ENCODE measurements at regions of chr15 and their contacts with region 1.

Region 1: DNA sequence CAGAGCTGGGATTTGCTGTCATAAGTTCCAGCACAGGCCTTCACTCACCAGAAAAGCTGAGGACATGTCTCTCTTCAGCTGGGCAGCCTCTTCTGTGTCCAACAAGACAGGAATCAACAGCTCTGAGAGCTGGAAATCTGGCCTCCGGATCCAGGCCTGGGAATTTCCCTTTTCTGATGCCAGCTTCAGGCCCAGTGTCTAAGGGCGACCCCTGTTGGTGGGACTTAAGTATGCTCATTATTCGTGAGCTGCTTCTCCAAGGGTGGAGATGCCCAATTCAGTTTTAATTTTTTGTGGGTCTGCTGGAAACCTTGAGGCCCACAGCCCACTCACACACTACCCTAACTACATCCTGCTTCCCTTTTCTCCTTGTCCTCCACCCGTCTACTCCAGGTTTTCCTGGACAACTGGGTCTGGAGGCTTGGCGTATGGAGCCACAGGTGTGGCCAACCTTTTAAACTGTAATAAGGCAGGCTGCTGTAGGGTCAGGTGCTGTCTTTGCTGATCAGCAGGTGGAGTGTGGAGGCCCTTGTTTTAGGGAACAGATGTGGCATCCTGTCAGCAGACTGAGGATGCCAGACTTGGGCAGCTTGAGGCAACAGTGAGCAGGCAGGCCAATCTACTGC is 2.6 kb upstream of the CEMIP start:
- DNase-seq: peak; percentile 83 to 86
- ATAC-seq: peak in 1 of 2 experiments; percentile 31; a peak in 3 of 6 replicates
- H3K4me3 ChIP-seq: no peak overlapping the region
- H3K27ac ChIP-seq: 0 out of 6 replicates have a peak overlapping the region, but pooled peaks of 1 of the 2 experiments have one; percentile 42
- H3K4me1 ChIP-seq: peaks cover 12% of the 10 kb centered on the region; the same call in 2 of the 3 replicates
- CTCF ChIP-seq: peak; percentile 97
- EP300 ChIP-seq: no peak
- POLR2A ChIP-seq: no peak
- RAD21 ChIP-seq: peak; percentile 93 to 98

Region 2: DNA sequence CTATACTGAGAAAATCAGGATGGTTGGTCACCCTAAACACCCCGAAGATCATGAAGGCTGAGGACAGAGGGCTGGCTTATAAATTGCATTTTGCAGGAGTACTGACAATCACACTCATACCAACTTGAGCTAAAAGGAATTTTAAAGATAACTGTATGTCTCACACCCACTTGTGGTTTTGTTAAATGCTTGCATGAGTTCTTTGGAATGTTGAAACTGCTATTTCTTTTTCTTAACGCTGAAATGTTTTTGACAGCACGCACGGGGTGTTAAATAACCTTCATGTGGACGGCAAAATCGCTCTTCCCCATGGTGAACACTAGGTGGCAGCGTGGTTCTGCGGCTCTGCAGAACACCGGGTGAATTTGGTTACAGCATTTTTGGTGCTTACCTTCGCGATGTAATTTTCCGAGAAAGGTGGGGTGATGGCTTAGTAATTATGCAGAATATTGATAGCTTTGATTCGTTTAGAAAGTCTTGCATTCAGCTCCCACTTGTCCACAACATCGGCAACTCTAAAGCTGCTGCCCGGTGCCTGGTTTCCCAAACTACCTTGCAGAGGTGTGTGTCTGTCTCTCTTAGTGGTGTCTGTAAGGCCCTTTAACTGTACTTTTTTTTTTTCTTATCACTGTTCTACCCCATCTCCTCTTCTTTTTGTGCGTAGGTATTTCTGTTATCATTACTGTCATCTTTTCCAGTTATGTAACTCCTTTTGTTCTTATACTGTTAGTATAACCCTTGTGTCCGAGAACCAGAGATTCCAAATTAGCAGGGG is 320.7 kb before region 1 on chr15:
- CTCF ChIA-PET with region 1: interaction called, 228 read pairs
- POLR2A ChIA-PET with region 1: no interaction called
- DNase-seq: peak; percentile 78 to 83
- ATAC-seq: peak; percentile 79 to 92
- H3K4me3 ChIP-seq: no peak overlapping the region
- H3K27ac ChIP-seq: no peak overlapping the region
- H3K4me1 ChIP-seq: peaks cover 14% of the 10 kb centered on the region
- CTCF ChIP-seq: peak; percentile 99
- EP300 ChIP-seq: no peak
- POLR2A ChIP-seq: no peak
- RAD21 ChIP-seq: peak; percentile 98 to 99

Region 3: GRCh38 chr15:80480909-80481308 is 295.6 kb before region 1 on chr15:
- CTCF ChIA-PET with region 1: interaction called, 12 read pairs
- POLR2A ChIA-PET with region 1: no interaction called
- DNase-seq: no peak
- ATAC-seq: peak; percentile 38 to 74; a peak in 3 of 6 replicates
- H3K4me3 ChIP-seq: no peak overlapping the region
- H3K27ac ChIP-seq: peak overlapping the region in 1 of 2 experiments; percentile 12; a peak in 1 of 6 replicates
- H3K4me1 ChIP-seq: peaks cover 15% of the 10 kb centered on the region; the same call in 2 of the 3 replicates
- CTCF ChIP-seq: no peak
- EP300 ChIP-seq: no peak
- POLR2A ChIP-seq: no peak
- RAD21 ChIP-seq: no peak

Region 4: DNA sequence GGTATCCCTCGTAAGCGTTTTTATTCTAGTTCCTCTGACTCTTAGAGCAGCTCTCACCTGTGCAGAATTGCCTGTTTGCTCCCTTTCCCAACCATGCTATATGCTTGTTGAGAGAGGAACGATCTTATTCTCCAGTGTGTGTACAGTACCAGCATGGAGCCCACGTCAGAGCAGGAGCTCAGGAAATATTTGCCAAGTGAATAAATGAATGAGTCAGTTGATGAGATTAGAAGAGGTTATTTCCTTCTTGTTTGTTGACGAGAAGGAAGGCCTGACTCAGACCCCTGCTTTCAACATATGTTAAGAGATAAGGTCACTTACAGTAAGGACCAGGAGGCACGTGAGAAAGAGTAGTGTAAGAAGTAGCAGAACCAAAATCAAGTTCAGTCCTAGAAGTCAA is 187.7 kb before region 1 on chr15:
- CTCF ChIA-PET with region 1: interaction called, 11 read pairs
- POLR2A ChIA-PET with region 1: no interaction called
- DNase-seq: peak; percentile 80 to 90
- ATAC-seq: peak; percentile 85 to 90
- H3K4me3 ChIP-seq: 0 out of 3 replicates have a peak overlapping the region, but pooled peaks have one; percentile 4
- H3K27ac ChIP-seq: peak overlapping the region; percentile 72 to 79
- H3K4me1 ChIP-seq: peaks cover 47% of the 10 kb centered on the region
- CTCF ChIP-seq: no peak
- EP300 ChIP-seq: peak; percentile 77 to 86; a peak in 3 of 5 replicates
- POLR2A ChIP-seq: no peak
- RAD21 ChIP-seq: no peak; a peak in 1 of 5 replicates

Region 5: GRCh38 chr15:80660122-80660521 is 116.4 kb before region 1 on chr15:
- CTCF ChIA-PET with region 1: interaction called, 67 read pairs
- POLR2A ChIA-PET with region 1: no interaction called
- DNase-seq: peak; percentile 55 to 63
- ATAC-seq: peak; percentile 98 to 100
- H3K4me3 ChIP-seq: no peak overlapping the region
- H3K27ac ChIP-seq: no peak overlapping the region
- H3K4me1 ChIP-seq: no peaks in the 10 kb centered on the region
- CTCF ChIP-seq: peak; percentile 53
- EP300 ChIP-seq: no peak
- POLR2A ChIP-seq: no peak
- RAD21 ChIP-seq: peak; percentile 60 to 73

Region 6: GRCh38 chr15:80727196-80727595 is 49.3 kb before region 1 on chr15:
- CTCF ChIA-PET with region 1: interaction called, 12 read pairs
- POLR2A ChIA-PET with region 1: no interaction called
- DNase-seq: no peak
- ATAC-seq: no peak
- H3K4me3 ChIP-seq: no peak overlapping the region
- H3K27ac ChIP-seq: no peak overlapping the region
- H3K4me1 ChIP-seq: no peaks in the 10 kb centered on the region
- CTCF ChIP-seq: no peak
- EP300 ChIP-seq: no peak
- POLR2A ChIP-seq: no peak
- RAD21 ChIP-seq: no peak

Region 7: GRCh38 chr15:80953936-80954778 is 177.6 kb after region 1 on chr15:
- CTCF ChIA-PET with region 1: interaction called, 18 read pairs
- POLR2A ChIA-PET with region 1: interaction called, 3 read pairs
- DNase-seq: peak in 1 of 2 experiments; percentile 30
- ATAC-seq: no peak
- H3K4me3 ChIP-seq: no peak overlapping the region
- H3K27ac ChIP-seq: peak overlapping the region; percentile 12 to 70; a peak in 3 of 6 replicates
- H3K4me1 ChIP-seq: peaks cover 27% of the 10 kb centered on the region
- CTCF ChIP-seq: no peak
- EP300 ChIP-seq: no peak
- POLR2A ChIP-seq: no peak
- RAD21 ChIP-seq: no peak

Region 8: GRCh38 chr15:81054236-81054635 is 277.7 kb after region 1 on chr15:
- CTCF ChIA-PET with region 1: no interaction called
- POLR2A ChIA-PET with region 1: no interaction called
- DNase-seq: no peak
- ATAC-seq: no peak
- H3K4me3 ChIP-seq: no peak overlapping the region
- H3K27ac ChIP-seq: no peak overlapping the region
- H3K4me1 ChIP-seq: no peaks in the 10 kb centered on the region
- CTCF ChIP-seq: no peak
- EP300 ChIP-seq: no peak
- POLR2A ChIP-seq: no peak
- RAD21 ChIP-seq: no peak

Region 9: DNA sequence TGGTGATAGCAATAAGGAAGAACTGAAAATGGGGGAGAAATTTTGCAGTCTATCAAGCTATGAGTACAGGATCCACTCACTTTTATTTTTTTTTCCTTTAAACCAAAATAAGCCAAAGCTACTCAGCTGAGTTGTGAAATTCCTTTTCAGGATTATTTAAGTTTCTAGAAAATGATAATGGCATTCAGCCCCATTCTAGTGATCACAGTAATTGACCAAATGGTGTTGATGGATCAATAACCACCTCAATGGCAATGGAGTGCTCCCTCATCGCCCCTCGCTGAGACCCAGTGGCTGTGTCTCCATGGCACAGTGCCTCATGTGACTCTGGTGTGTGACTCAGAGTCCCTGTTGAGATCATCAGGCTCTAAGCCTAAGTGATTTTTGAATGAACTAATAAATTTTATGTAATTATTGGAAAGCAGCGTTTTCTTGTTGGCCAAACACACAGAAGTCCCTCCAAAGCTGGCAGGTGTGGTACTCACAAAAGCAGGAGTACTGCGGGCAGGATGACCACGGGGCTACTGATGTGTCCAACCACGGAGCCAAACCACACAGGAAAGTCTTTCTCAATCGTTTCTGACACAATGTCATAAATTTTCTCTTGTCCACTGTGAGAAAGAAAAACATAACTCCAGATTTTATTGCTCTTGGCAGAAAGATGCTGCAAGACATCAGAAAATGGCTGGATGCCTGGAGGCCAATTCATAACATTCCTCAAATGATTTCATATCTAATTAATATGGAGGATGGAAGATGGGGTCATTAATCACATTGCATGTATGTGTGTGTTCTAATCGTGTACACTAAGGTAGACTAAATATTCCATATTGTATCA is 561.9 kb after region 1 on chr15:
- CTCF ChIA-PET with region 1: no interaction called
- POLR2A ChIA-PET with region 1: no interaction called
- DNase-seq: peak in 1 of 2 experiments; percentile 23
- ATAC-seq: peak in 1 of 2 experiments; percentile 57; a peak in 1 of 6 replicates
- H3K4me3 ChIP-seq: no peak overlapping the region
- H3K27ac ChIP-seq: no peak overlapping the region
- H3K4me1 ChIP-seq: peaks cover 13% of the 10 kb centered on the region; the same call in 2 of the 3 replicates
- CTCF ChIP-seq: no peak
- EP300 ChIP-seq: peak in 1 of 2 experiments; percentile 34; a peak in 1 of 5 replicates
- POLR2A ChIP-seq: no peak
- RAD21 ChIP-seq: no peak

Measured in A549 (cell line).